ENCODE measurements at regions of chr15 and their contacts with region 1.

Region 1: GRCh38 chr15:29747837-29748417 is 74.3 kb downstream of the TJP1 start:
- DNase-seq: no peak
- H3K4me3 ChIP-seq: no peak overlapping the region
- H3K27ac ChIP-seq: no peak overlapping the region
- H3K27me3 ChIP-seq: no peaks in the 10 kb centered on the region
- CTCF ChIP-seq: peak; percentile 46

Region 2: GRCh38 chr15:29952225-29952624 is 204.3 kb after region 1 on chr15:
- CTCF ChIA-PET with region 1: no interaction called
- POLR2A ChIA-PET with region 1: no interaction called
- DNase-seq: no peak
- H3K4me3 ChIP-seq: no peak overlapping the region
- H3K27ac ChIP-seq: no peak overlapping the region
- H3K27me3 ChIP-seq: no peaks in the 10 kb centered on the region
- CTCF ChIP-seq: no peak

Region 3: GRCh38 chr15:30043211-30043655 is 295.3 kb after region 1 on chr15:
- CTCF ChIA-PET with region 1: interaction called, 30 read pairs
- POLR2A ChIA-PET with region 1: no interaction called
- DNase-seq: no peak
- H3K4me3 ChIP-seq: no peak overlapping the region
- H3K27ac ChIP-seq: no peak overlapping the region
- H3K27me3 ChIP-seq: no peaks in the 10 kb centered on the region
- CTCF ChIP-seq: peak; percentile 38

Measured in AG04450 (cell line).